Dorsolateral prefrontal cortex (tissue), 120 donors: ENCODE measurements at regions of chr19 and their contacts with region 1.

Region 1: DNA sequence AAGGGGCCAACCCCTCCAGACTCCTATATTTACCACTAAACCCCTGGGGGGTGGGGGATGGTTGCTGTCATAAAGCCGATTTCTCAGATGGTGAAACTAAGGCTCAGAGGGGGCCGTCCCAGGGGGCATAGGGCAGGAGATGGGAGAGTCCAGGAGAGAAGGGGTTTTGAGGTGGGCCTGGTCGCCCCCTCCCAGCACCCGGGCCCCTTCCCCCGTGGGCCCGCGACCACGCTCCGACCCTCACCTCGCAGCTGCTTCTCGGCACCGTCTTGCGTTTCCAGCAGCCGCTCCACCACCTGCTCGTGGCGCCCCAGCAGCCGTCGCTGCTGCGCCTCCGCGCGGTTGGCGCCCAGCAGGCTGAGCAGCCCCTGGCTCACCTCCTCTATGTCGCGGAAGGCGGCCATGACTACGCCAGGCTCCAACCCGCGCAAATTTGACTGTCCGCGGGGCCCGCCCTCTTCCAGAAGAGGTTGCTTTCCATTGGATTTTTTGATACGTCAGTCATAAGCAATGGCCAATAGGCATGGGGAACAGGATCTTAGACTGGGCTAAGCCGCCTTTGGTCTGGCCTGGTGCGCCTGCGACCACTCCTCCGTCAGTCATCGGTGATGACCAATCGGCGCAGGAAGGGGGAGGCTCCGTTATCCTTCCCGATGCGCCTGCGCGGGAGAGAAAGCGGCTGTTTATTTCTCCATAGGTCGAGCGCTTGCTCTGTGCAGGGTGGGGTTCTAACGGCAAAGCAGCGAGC is at the start of gene SPC24:
- DNase-seq: peak; percentile 96 to 99 (median 98)
- H3K4me3 ChIP-seq: peak within 1 kb of the TSS; percentile 40 to 84 (median 65)
- H3K27ac ChIP-seq: peak within 1 kb of the TSS in 57 of 59 donors; percentile 55 to 95 (median 84)
- H3K27me3 ChIP-seq: no peaks in the 10 kb centered on the region
- CTCF ChIP-seq: peak in 14 of 56 donors; percentile 7 to 51 (median 24)
- total RNA-seq, gene SPC24: 0.44 to 4.9 (median 1.8) TPM in 119 of 120 experiments, not detected in the other

Region 2: DNA sequence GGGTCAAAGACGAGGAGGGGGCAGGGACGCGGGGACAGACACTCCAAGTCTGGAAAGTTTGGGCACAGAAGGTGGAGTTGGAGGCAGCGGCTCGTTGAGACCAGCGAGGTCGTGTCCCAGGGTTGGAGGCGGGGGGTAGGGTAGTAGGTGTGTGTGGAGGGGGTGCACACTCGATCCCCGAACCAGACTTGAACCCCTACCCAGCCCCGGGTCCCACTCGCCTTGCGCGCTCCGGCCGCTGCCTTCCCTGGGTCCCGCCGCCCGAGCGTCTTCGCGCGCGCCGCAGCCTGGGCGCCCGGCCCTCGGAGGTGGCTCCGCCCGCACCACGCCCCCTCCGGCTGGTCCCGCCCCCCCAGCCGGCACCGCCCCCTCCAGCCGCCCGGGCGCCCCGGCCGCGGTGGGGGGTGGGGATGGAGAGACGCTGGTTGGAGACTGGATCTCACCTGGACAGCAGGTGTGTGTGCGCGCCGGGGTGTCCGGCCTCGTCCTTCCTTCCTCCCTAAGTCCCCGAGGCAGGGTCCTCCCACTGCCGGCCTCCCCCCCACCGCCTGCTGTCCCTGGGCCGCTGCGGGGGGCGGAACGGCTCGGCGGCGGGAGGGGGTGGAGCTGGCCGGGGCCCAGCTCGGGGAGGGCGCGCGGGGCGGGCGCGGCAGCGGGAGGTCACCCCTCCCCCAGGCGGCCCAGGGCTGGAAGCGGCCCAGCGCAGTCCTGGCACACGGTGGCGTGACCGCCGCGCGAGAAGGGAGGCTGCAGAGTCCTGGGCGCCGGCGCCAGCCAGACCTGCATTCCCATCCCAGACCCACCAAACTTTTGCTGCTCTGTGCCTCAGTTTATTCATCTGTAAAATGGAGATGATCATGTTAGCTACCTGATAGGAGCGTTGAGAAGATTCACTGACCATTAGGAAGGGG is 42.0 kb after region 1 on chr19 and contains the start of gene KANK2:
- intact Hi-C with region 1: loop called (anchors 2 to 5 kb)
- DNase-seq: peak; percentile 36 to 87 (median 64)
- H3K4me3 ChIP-seq: peak within 1 kb of the TSS; percentile 48 to 82 (median 68)
- H3K27ac ChIP-seq: peak within 1 kb of the TSS in 58 of 59 donors; percentile 36 to 92 (median 80)
- H3K27me3 ChIP-seq: no peaks in the 10 kb centered on the region
- CTCF ChIP-seq: peak in 19 of 56 donors; percentile 6 to 44 (median 23)
- total RNA-seq, gene KANK2: 13.8 to 97.3 (median 30.1) TPM